ENCODE measurements at regions of chr6 and their contacts with region 1.

Region 1: GRCh38 chr6:1363729-1364572 is 25.4 kb upstream of the FOXF2 start:
- DNase-seq: no peak
- H3K4me3 ChIP-seq: no peak overlapping the region
- H3K27ac ChIP-seq: no peak overlapping the region
- H3K4me1 ChIP-seq: no peaks in the 10 kb centered on the region
- H3K27me3 ChIP-seq: peaks cover 3% of the 10 kb centered on the region
- CTCF ChIP-seq: peak; percentile 18 to 56 (median 21)

Region 2: DNA sequence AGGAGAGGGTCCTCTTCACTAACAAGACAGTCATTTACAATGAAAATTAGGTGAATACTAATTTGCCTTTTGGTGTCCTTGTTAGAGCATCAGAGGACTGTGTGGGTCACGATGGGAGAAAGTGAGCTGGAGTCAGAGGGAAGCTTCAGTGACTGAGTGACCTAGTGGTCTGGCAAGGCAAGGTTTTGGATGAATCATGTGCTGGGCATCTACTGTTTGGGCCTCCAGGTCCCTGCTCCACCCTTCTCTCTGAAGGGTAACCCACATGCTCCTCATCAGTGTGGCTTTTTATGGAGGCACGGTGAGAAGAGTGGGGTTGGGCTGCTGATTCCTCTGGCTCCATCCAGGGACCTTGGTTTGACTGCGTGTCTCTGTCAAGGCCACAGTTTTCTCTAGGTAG is 610.5 kb before region 1 on chr6:
- dilution Hi-C with region 1: loop called (anchors 25 kb)
- DNase-seq: no peak
- H3K4me3 ChIP-seq: no peak overlapping the region
- H3K27ac ChIP-seq: no peak overlapping the region
- H3K4me1 ChIP-seq: no peaks in the 10 kb centered on the region
- H3K27me3 ChIP-seq: no peaks in the 10 kb centered on the region
- CTCF ChIP-seq: no peak

Region 3: DNA sequence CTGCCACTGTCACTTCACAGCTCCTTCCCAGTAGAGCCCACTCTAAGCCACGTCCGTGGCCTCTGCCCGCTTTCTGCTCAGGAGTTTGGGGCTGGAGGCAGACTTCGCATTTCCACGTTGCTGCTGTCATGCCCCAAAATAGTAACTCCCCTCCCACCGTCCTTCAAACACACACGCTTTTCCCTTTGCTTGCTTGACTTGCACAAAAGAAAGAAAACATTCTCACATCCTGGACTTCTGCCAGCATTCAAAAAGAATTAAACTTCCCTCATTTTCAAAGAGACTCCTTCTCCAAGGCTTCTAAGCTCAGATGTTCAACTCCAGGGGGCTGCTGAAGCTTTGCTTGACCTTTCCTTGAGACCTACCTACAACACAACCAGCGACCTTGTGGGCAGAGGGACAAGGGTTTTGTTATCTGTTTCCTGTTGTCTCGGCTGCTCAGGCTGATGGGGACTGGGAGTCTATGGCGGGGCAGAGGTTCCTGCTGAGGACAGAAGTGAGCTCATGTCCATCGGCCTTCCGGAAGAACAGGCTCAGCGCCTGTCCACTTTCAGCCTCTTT is 315.9 kb before region 1 on chr6:
- dilution Hi-C with region 1: no loop called
- DNase-seq: no peak
- H3K4me3 ChIP-seq: no peak overlapping the region
- H3K27ac ChIP-seq: no peak overlapping the region
- H3K4me1 ChIP-seq: no peaks in the 10 kb centered on the region
- H3K27me3 ChIP-seq: peaks cover 5% of the 10 kb centered on the region
- CTCF ChIP-seq: no peak

Region 4: GRCh38 chr6:1062786-1063545 is 301.0 kb before region 1 on chr6:
- dilution Hi-C with region 1: no loop called
- DNase-seq: no peak
- H3K4me3 ChIP-seq: no peak overlapping the region
- H3K27ac ChIP-seq: no peak overlapping the region
- H3K4me1 ChIP-seq: no peaks in the 10 kb centered on the region
- H3K27me3 ChIP-seq: no peaks in the 10 kb centered on the region
- CTCF ChIP-seq: peak in 1 of 3 experiments; percentile 35

Region 5: DNA sequence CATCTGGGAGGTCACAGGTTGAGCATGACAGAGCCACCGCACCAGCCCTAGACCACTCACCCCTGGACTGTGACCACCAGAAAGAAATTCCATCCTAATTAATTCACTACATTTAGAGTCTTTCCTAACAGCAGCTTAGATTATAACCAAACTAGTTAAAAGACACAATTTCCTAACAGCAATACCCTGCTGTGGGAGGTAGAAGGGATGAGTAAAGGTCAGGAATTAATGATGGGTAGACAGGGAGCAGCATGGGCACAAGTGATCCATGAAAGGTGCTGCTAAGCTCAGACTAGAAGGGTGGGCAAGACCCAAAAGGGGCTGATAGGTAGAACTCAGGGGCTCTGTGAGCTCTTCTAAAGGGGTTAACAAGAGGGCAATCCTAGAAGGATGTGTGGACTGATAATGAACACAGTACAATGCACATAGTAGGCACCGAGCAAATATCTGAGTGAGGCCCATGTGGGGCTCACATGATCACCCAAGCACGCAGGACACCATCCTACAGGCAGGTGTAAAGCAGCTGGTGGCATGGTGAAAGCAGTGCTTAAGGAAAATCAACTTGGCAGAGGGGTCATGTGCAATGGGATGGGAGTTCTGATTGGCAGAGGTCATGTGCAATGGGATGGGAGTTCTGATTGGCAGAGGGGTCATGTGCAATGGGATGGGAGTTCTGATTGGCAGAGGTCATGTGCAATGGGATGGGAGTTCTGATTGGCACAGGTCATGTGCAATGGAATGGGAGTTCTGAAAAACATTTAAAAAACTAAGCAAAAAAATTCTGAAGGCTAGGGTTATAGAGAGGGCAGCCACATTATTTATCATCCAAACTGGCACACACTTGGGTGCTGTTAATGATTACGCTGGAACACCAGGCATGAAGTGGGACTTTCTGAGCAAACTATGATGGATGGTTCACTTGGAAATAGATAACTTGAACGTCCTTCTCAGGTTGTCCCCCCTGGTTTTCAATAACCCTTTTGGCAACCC is 240.3 kb before region 1 on chr6:
- dilution Hi-C with region 1: no loop called
- DNase-seq: no peak
- H3K4me3 ChIP-seq: no peak overlapping the region
- H3K27ac ChIP-seq: no peak overlapping the region
- H3K4me1 ChIP-seq: no peaks in the 10 kb centered on the region
- H3K27me3 ChIP-seq: no peaks in the 10 kb centered on the region
- CTCF ChIP-seq: no peak

Measured in keratinocyte (primary cell).